PC-3 (cell line): ENCODE measurements at regions of chr3 and their contacts with region 1.

Region 1: GRCh38 chr3:41216993-41217392 is 17.7 kb downstream of the CTNNB1 start:
- DNase-seq: peak; percentile 10
- ATAC-seq: peak; percentile 58; the same call in 1 of the 2 replicates
- H3K4me3 ChIP-seq: no peak overlapping the region
- H3K27ac ChIP-seq: no peak overlapping the region
- H3K4me1 ChIP-seq: peaks cover 24% of the 10 kb centered on the region
- H3K27me3 ChIP-seq: no peaks in the 10 kb centered on the region
- CTCF ChIP-seq: no peak

Region 2: GRCh38 chr3:41234823-41235721 is 18.1 kb after region 1 on chr3:
- CTCF ChIA-PET with region 1: no interaction called
- POLR2A ChIA-PET with region 1: no interaction called
- intact Hi-C with region 1: no loop called
- DNase-seq: peak; percentile 39
- ATAC-seq: peak; percentile 85
- H3K4me3 ChIP-seq: no peak overlapping the region
- H3K27ac ChIP-seq: no peak overlapping the region
- H3K4me1 ChIP-seq: no peaks in the 10 kb centered on the region
- H3K27me3 ChIP-seq: no peaks in the 10 kb centered on the region
- CTCF ChIP-seq: no peak

Region 3: DNA sequence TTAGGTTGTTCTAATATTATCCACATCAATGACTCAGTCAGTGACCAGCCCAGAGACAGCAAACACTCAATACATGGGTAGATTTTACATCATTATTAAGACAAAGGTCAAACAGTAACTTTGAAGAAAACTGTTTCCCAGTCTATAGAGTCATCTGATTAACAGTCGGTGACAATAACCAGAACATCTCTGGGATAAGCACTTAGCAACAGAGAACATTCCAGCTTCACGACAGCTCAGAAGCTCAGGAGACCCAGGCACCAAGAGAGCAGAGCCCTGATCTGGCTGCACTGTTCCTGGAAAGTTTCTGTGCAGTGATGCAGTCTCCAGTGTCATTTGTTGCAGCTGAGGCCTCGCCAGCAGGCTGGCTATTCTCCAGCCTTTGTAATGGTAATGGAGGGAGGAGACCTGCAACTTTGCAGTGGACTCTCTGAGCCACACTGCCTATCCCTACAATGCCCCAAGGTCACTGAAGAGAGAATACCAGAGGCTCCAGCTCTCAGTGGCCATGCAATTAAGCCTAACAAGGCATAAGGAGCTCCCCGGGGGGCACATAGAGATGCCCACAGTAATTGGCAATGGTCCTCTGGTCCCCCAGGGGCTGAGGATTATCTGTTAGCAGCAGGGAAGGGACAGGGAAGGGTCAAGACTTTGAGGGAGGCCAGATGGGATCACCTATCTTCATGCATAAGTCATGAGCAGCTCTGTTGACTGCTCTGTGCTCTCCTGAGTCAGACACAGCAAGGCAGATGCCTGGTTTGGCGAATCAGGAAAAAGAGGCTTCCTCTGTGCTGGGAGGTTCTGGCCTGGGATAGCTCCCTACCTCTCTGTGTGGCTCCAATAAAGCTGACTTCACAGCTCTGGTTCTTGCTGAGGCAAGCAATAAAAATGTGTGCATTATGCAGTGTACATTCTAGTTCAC is 145.9 kb after region 1 on chr3:
- CTCF ChIA-PET with region 1: no interaction called
- POLR2A ChIA-PET with region 1: interaction called, 10 read pairs
- intact Hi-C with region 1: no loop called
- DNase-seq: no peak
- ATAC-seq: peak; percentile 70
- H3K4me3 ChIP-seq: no peak overlapping the region
- H3K27ac ChIP-seq: no peak overlapping the region
- H3K4me1 ChIP-seq: peaks cover 11% of the 10 kb centered on the region
- H3K27me3 ChIP-seq: no peaks in the 10 kb centered on the region
- CTCF ChIP-seq: no peak

Region 4: DNA sequence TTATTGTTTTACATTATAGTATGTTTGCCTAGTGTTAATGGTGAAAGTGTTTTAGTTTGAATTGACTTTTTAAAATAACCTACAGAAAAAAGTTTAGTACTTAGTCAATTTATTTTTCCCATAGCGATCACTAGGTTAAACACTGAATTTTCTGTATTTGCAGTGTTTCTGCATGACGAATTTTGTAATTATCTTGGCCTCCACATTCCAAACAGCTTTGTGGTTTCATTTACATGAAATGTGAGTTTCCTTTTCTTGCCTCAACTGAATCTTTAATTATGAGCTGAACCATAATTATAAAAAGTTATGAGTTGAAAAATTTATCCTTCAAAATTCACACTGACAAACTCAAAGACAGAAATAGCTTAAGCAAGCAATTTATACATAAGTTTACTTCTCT is 217.8 kb after region 1 on chr3:
- CTCF ChIA-PET with region 1: no interaction called
- POLR2A ChIA-PET with region 1: no interaction called
- intact Hi-C with region 1: no loop called
- DNase-seq: no peak
- ATAC-seq: no peak
- H3K4me3 ChIP-seq: no peak overlapping the region
- H3K27ac ChIP-seq: no peak overlapping the region
- H3K4me1 ChIP-seq: no peaks in the 10 kb centered on the region
- H3K27me3 ChIP-seq: no peaks in the 10 kb centered on the region
- CTCF ChIP-seq: no peak

Region 5: DNA sequence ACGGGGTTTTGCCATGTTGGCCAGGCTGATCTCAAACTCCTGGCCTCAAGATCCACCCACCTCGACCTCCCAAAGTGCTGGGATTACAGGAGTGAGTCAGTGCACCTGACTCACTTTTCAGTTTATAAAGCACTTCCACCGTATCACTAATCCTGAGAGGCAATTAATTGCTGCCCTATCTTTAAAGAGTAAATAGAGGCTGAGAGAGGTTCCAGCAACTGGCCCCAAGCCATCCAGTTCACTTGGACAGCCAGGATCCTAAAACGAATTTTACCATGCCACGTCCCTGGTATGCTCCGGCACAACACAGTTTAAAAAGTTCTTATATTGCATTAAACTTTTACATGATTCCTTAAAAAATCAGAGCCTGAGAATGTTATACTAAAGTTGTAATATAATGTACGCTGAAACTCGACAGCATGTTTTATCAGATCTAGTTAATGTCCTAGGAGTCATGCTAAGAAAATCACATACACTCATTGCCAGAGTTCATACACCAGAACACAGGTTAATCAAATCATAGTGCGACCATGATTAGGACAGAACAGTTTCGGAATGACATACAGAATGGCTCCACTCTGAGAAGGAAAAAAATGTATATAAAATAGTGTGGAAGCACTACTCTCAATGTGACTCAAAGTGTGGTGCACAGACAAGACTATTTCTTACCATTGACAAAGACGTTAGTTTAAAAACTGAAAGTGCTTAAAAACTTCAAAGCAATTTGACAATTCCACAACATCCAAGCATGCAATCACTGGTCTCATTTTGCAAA is 619.6 kb after region 1 on chr3:
- CTCF ChIA-PET with region 1: no interaction called
- POLR2A ChIA-PET with region 1: interaction called, 12 read pairs
- intact Hi-C with region 1: no loop called
- DNase-seq: peak; percentile 72
- ATAC-seq: peak; percentile 95
- H3K4me3 ChIP-seq: no peak overlapping the region
- H3K27ac ChIP-seq: no peak overlapping the region
- H3K4me1 ChIP-seq: peaks cover 10% of the 10 kb centered on the region; the same call in 1 of the 2 replicates
- H3K27me3 ChIP-seq: no peaks in the 10 kb centered on the region
- CTCF ChIP-seq: no peak